ENCODE measurements at regions of chr11 and their contacts with region 1.

Region 1: GRCh38 chr11:122101625-122102291 is 14.3 kb downstream of the BLID start:
- DNase-seq: peak; percentile 58
- H3K4me3 ChIP-seq: peak overlapping the region; percentile 77 to 80
- H3K27ac ChIP-seq: peak overlapping the region; percentile 94 to 98
- H3K4me1 ChIP-seq: peaks cover 9 to 37% of the 10 kb centered on the region in 2 experiments
- H3K27me3 ChIP-seq: no peaks in the 10 kb centered on the region
- CTCF ChIP-seq: peak; percentile 68
- EP300 ChIP-seq: peak in 1 of 2 experiments; percentile 14; a peak in 1 of 4 replicates
- RAD21 ChIP-seq: peak; percentile 82

Region 2: GRCh38 chr11:121722431-121723245 is 379.1 kb before region 1 on chr11:
- CTCF ChIA-PET with region 1: interaction called, 14 read pairs
- POLR2A ChIA-PET with region 1: interaction called, 8 read pairs
- DNase-seq: peak; percentile 82
- H3K4me3 ChIP-seq: peak overlapping the region in 1 of 2 experiments; percentile 28; a peak in 1 of 4 replicates
- H3K27ac ChIP-seq: peak overlapping the region in 1 of 2 experiments; percentile 89; a peak in 2 of 4 replicates
- H3K4me1 ChIP-seq: peaks cover 8 to 14% of the 10 kb centered on the region in 2 experiments; a peak in 2 of 4 replicates
- H3K27me3 ChIP-seq: no peaks in the 10 kb centered on the region
- CTCF ChIP-seq: no peak
- EP300 ChIP-seq: peak in 1 of 2 experiments; percentile 65; a peak in 2 of 4 replicates
- RAD21 ChIP-seq: peak; percentile 31; the same call in 1 of the 2 replicates

Region 3: DNA sequence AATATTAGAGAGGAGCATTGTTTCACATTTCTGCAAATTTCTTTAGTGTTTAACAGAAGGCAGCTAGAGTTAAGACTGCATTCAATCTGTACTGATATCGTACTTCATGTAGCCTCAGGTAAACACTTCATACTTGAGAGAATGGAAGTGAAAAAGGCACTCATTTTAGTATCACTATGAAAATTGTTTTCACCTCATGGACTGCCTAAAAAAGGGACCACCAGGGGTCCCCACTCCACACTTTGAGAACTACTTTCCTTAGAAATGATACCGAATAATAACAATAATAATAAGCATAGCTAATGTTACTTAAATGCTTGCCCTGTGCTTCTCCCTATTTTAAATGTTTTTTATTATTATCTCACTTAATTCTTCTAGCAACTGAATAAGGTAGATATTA is 80.9 kb before region 1 on chr11:
- CTCF ChIA-PET with region 1: interaction called, 13 read pairs
- POLR2A ChIA-PET with region 1: no interaction called
- DNase-seq: peak; percentile 8
- H3K4me3 ChIP-seq: no peak overlapping the region
- H3K27ac ChIP-seq: no peak overlapping the region
- H3K4me1 ChIP-seq: peaks cover 3 to 12% of the 10 kb centered on the region in 2 experiments; a peak in 3 of 4 replicates
- H3K27me3 ChIP-seq: no peaks in the 10 kb centered on the region
- CTCF ChIP-seq: peak; percentile 68
- EP300 ChIP-seq: no peak
- RAD21 ChIP-seq: peak; percentile 68

Region 4: DNA sequence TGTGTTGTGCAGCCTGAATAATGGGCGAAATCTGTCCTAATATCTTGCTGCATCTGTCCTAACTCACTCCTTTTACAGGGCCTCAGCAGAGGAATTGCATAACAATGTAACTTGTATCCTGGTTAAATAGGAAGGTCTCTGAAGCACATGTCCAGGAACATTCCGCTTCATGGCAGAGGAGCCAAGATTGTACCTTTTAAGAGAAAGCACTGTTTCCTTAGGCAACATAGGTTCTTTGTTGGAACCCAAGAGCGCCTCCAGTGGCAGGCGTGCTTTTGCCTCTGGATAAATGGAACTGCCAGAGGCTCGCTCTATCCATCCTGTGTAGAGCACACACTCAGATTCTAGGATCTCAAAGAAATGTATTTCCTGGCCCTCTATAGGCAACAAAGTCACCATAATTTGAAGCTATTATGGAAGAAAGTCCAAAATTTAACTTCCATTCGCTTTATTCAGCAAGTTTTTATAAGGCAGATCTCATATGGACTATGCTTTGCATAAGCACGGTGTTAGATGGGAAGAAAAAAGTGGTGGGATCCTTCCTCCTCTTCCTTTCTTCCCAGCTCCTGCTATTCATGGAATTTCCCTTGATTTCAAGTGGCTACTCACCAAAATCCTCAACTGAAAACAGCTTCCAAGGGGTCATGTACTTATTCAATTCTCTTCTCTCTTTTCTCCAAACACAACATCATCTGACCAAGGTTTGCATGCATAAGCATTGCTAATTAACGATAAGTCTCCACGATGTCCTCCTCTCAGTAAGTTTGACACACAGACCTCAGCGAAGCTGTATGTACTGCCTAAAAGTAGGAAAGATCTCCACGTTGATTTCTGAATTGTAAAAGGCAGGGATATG is 14.0 kb after region 1 on chr11 and contains the start of gene BLID:
- CTCF ChIA-PET with region 1: interaction called, 13 read pairs
- POLR2A ChIA-PET with region 1: no interaction called
- DNase-seq: no peak
- H3K4me3 ChIP-seq: no peak within 1 kb of the TSS
- H3K27ac ChIP-seq: peak within 1 kb of the TSS; percentile 16 to 44; a peak in 3 of 4 replicates
- H3K4me1 ChIP-seq: peaks cover 2 to 11% of the 10 kb centered on the region in 2 experiments; a peak in 3 of 4 replicates
- H3K27me3 ChIP-seq: no peaks in the 10 kb centered on the region
- CTCF ChIP-seq: peak; percentile 58
- EP300 ChIP-seq: no peak
- RAD21 ChIP-seq: no peak
- polyA plus RNA-seq, gene BLID: 0.18 TPM in 1 of 2 replicates, not detected in the other

Region 5: DNA sequence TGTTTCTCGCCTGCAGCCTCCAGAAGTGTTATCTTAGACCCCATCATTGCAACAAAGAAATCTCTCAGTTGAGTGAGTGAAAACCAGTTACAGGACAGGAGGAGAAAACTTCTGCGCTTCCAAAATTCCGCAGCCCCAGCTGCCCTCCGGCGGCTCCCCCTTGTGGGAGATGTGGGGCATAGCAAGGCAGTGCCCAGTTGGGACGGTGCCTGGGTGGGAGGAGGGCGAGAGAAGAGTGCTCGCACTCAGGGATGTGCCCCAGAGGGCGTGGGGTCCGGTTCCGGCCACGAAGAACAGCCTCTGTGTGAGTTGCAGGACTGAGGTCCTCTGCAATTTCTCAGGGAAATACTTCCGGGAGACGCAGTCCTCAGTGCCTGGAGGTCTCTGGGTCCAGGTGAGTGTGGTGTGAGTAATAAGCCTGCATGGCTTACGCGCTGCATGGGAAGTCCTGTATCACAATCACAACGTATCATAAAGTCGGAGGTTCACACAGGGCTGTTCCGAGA is 101.2 kb after region 1 on chr11:
- CTCF ChIA-PET with region 1: interaction called, 35 read pairs
- POLR2A ChIA-PET with region 1: no interaction called
- DNase-seq: peak; percentile 79
- H3K4me3 ChIP-seq: peak overlapping the region; percentile 47 to 67; a peak in 3 of 4 replicates
- H3K27ac ChIP-seq: peak overlapping the region; percentile 85 to 99
- H3K4me1 ChIP-seq: peaks cover 13 to 22% of the 10 kb centered on the region in 2 experiments
- H3K27me3 ChIP-seq: no peaks in the 10 kb centered on the region
- CTCF ChIP-seq: peak; percentile 98
- EP300 ChIP-seq: peak in 1 of 2 experiments; percentile 37; a peak in 1 of 4 replicates
- RAD21 ChIP-seq: peak; percentile 90